Mammary epithelial cell (primary cell): ENCODE measurements at regions of chr13 and their contacts with region 1.

Region 1: GRCh38 chr13:33931397-33932311 is 113.7 kb downstream of the RFC3 start:
- DNase-seq: peak; percentile 43
- H3K4me3 ChIP-seq: no peak overlapping the region
- H3K27ac ChIP-seq: no peak overlapping the region
- H3K4me1 ChIP-seq: peaks cover 3% of the 10 kb centered on the region
- H3K27me3 ChIP-seq: no peaks in the 10 kb centered on the region
- CTCF ChIP-seq: peak; percentile 56

Region 2: GRCh38 chr13:34076943-34077703 is 145.5 kb after region 1 on chr13:
- CTCF ChIA-PET with region 1: no interaction called
- dilution Hi-C with region 1: no loop called
- in situ Hi-C with region 1: loop called (anchors 5 kb)
- intact Hi-C with region 1: loop called (anchors 1 kb)
- DNase-seq: peak; percentile 16
- H3K4me3 ChIP-seq: no peak overlapping the region
- H3K27ac ChIP-seq: peak overlapping the region; percentile 25
- H3K4me1 ChIP-seq: peaks cover 10% of the 10 kb centered on the region
- H3K27me3 ChIP-seq: no peaks in the 10 kb centered on the region
- CTCF ChIP-seq: peak; percentile 54 to 68

Region 3: GRCh38 chr13:34145069-34145468 is 213.4 kb after region 1 on chr13:
- CTCF ChIA-PET with region 1: no interaction called
- dilution Hi-C with region 1: no loop called
- in situ Hi-C with region 1: no loop called
- intact Hi-C with region 1: no loop called
- DNase-seq: no peak
- H3K4me3 ChIP-seq: no peak overlapping the region
- H3K27ac ChIP-seq: no peak overlapping the region
- H3K4me1 ChIP-seq: peaks cover 4% of the 10 kb centered on the region
- H3K27me3 ChIP-seq: no peaks in the 10 kb centered on the region
- CTCF ChIP-seq: no peak

Region 4: GRCh38 chr13:34657716-34658115 is 726.1 kb after region 1 on chr13:
- CTCF ChIA-PET with region 1: no interaction called
- dilution Hi-C with region 1: no loop called
- in situ Hi-C with region 1: no loop called
- intact Hi-C with region 1: loop called (anchors 10 kb)
- DNase-seq: peak; percentile 75
- H3K4me3 ChIP-seq: no peak overlapping the region
- H3K27ac ChIP-seq: no peak overlapping the region
- H3K4me1 ChIP-seq: peaks cover 2% of the 10 kb centered on the region
- H3K27me3 ChIP-seq: no peaks in the 10 kb centered on the region
- CTCF ChIP-seq: no peak

Region 5: DNA sequence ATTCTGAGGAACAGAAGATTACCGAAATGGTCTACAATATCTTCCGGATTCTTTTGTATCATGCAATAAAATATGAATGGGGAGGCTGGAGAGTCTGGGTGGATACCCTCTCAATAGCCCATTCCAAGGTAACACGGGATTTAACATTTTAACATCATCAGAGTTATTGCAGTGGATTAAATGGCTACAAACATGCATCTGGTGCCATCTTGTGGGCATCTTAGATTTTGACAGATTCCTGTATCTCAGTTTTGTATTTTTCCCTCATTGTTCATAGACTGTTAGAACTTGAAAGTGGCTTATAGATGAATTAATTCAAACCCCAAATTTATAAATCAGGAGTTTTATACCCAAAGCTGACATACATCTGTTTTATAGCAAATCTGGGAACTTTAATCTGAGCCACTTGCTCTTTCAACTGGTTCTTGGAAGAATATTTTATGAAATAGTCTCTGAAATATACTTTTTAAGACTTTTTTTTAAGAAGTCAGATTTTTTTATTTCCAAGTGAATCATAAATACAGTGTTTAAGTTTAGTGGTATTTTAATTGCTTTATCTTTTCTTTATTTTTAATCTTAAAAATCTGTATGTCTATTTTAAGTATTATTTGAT is 1225.6 kb after region 1 on chr13:
- CTCF ChIA-PET with region 1: no interaction called
- dilution Hi-C with region 1: no loop called
- in situ Hi-C with region 1: loop called in 1 of 2 experiments (anchors 25 kb)
- intact Hi-C with region 1: loop called (anchors 1 kb)
- DNase-seq: peak; percentile 29
- H3K4me3 ChIP-seq: no peak overlapping the region
- H3K27ac ChIP-seq: no peak overlapping the region
- H3K4me1 ChIP-seq: no peaks in the 10 kb centered on the region
- H3K27me3 ChIP-seq: no peaks in the 10 kb centered on the region
- CTCF ChIP-seq: peak; percentile 68 to 72

Region 6: DNA sequence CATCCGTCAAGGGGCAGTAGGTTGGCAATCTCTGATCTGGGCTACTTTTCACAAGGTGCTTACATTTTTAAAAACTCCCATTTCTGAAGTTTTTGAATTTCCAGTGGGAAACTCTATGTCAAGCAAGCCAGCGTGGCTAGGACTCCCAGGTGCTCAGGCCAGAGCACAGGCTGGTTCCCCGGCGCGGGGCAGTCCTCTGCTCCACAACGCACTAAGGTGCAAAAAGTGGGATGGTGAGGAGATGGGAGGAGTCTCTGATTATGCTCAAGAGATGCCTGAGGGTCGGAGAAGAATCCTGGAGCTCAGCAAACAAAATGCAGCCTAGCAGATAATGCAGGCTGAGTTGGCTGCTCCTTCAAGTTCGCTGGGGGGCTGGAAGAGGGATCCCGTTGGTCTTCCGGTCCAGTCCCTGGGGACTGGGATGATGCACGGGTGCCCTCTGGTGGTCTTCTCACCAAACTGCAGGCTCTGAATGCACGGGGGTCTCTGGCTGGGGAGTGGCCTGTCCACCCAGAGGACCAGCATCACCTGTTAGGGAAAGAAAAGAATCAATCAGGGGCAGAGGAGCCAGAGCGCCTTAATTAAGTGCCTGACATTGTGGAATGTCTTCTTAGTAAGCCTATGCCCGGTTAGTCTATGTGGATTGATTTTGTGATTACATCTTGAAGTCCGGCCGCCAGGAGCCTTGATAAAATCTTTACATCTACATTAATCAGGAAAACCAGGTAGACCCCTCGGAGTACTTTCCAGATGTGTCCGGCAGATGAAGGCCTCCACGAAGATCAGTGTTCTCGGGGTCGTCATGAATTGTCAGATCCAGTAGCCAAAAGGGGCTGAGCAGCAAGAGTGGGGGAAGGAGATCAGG is 1789.3 kb after region 1 on chr13:
- CTCF ChIA-PET with region 1: no interaction called
- dilution Hi-C with region 1: no loop called
- in situ Hi-C with region 1: no loop called
- intact Hi-C with region 1: loop called (anchors 5 kb)
- DNase-seq: peak; percentile 9
- H3K4me3 ChIP-seq: no peak overlapping the region
- H3K27ac ChIP-seq: no peak overlapping the region
- H3K4me1 ChIP-seq: no peaks in the 10 kb centered on the region
- H3K27me3 ChIP-seq: no peaks in the 10 kb centered on the region
- CTCF ChIP-seq: peak; percentile 83 to 95